BJ (cell line): ENCODE measurements at regions of chr12 and their contacts with region 1.

Region 1: DNA sequence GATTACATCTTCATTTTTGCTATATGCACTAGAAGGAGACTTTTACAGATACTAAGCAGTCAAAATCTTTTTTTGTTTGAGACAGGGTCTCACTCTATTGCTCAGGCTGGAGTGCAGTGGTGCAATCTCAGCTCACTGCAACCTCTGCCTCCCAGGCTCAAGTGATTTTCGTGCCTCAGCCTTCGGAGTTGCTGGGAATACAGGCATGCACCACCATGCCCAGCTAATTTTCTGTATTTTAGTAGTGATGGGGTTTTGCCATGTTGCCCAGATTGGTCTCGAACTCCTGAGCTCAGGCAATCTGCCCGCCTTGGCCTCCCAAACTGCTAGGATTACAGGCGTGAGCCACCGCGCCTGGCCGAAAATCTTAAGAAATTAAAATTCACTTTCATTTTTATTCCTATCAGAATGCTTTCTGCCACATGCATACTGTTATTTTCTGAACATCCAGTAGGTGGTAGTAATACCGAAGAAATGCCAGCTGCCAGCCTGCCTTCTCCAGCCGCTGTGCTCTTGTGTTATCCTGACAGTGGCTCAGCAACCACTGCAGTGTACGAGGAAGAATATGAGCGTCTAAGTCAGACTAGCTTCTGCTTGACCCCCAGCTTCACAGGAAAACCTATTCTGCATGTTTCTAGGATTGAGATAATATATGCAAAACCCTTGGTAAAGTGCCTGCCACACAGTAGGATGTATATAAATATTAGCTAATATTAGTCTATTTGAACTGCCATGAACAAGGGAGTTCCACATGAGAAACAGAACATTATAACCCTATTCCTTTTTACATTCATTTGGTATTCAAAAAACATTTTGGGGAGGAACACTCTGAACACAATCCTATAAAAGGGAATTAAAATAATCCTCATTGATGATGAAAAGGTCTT is 54.2 kb downstream of the RPAP3 start:
- DNase-seq: no peak
- H3K4me3 ChIP-seq: no peak overlapping the region
- H3K27me3 ChIP-seq: no peaks in the 10 kb centered on the region
- CTCF ChIP-seq: peak; percentile 69

Region 2: GRCh38 chr12:47574252-47575021 is 77.2 kb before region 1 on chr12:
- CTCF ChIA-PET with region 1: no interaction called
- POLR2A ChIA-PET with region 1: no interaction called
- DNase-seq: no peak
- H3K4me3 ChIP-seq: no peak overlapping the region
- H3K27me3 ChIP-seq: no peaks in the 10 kb centered on the region
- CTCF ChIP-seq: no peak

Region 3: GRCh38 chr12:47636908-47637780 is 14.5 kb before region 1 on chr12:
- CTCF ChIA-PET with region 1: interaction called, 12 read pairs
- POLR2A ChIA-PET with region 1: no interaction called
- DNase-seq: no peak
- H3K4me3 ChIP-seq: no peak overlapping the region
- H3K27me3 ChIP-seq: no peaks in the 10 kb centered on the region
- CTCF ChIP-seq: peak; percentile 55

Region 4: GRCh38 chr12:47672068-47672467 is 20.5 kb after region 1 on chr12:
- CTCF ChIA-PET with region 1: interaction called, 10 read pairs
- POLR2A ChIA-PET with region 1: no interaction called
- DNase-seq: no peak
- H3K4me3 ChIP-seq: no peak overlapping the region
- H3K27me3 ChIP-seq: no peaks in the 10 kb centered on the region
- CTCF ChIP-seq: no peak

Region 5: GRCh38 chr12:47686645-47687240 is 35.1 kb after region 1 on chr12:
- CTCF ChIA-PET with region 1: interaction called, 14 read pairs
- POLR2A ChIA-PET with region 1: no interaction called
- DNase-seq: no peak
- H3K4me3 ChIP-seq: no peak overlapping the region
- H3K27me3 ChIP-seq: no peaks in the 10 kb centered on the region
- CTCF ChIP-seq: peak; percentile 78